ENCODE measurements at regions of chr2 and their contacts with region 1.

Region 1: DNA sequence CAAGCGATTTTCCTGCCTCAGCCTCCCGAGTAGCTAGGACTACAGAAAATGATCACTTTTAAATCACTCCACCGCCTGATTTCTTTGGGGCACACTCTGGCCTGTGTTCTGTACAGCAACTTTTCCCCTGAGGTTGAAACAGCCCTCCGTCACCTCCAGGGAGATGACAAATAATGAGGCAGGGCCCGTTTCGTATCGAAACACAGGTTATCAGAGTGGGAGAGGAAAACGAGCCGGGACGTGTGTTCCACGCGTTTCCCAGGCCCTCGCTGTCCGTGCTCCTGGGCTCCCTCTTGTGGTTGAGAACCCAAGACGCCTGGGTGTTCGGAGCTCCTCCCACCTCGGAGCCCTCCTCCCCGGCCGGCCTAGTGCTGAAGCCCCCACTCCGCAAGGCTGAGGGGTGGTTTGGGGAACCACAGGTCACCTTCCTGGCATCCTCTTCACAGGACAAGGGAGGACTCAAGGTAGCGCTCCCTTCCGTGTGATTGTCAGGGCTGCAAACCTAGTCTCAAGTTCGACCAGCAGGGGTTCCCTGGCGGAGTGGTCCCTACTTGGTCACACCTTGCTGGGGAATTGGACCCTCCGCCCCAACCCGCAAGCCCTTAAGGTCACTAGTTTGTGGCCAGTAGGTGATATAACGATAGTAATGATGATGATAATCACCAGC is 12.8 kb downstream of the ATP6V1B1 start:
- DNase-seq: peak; percentile 85
- ATAC-seq: peak; percentile 95 to 96

Region 2: DNA sequence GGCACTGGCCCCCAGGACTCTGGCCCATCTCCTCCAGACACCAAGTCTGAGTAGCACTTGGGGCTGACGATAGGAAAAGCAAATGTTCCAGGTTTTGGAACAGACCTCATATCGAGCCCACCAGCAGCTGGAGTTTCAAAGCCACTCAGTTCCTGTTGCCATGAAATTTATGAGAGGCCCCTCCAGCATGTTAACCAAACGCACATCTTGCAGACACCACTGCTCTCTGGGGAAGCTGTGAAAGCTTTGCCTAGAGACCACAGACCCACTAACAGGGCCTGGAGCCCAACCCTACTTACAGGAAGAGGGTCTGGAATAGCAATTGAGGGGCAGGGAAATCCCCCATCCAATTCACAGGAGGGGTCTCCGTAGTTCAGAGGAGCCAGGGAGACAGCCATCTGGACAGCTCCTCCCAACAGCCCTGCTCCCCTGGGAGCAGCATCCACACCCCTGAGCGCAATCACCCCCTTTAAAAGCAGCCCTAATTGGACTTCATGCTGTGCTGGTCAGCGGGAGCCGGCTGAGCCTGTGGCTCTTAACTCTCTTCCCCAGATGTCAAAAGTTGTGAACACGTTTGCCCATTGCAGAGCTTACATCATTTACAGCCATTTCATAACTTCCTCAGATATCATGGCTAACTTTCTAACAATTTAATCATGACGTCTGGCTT is 476.1 kb before region 1 on chr2:
- intact Hi-C with region 1: no loop called
- DNase-seq: no peak
- ATAC-seq: no peak

Region 3: GRCh38 chr2:70656421-70657010 is 292.0 kb before region 1 on chr2:
- intact Hi-C with region 1: loop called in 1 of 2 experiments (anchors 10 kb)
- DNase-seq: no peak
- ATAC-seq: no peak

Region 4: DNA sequence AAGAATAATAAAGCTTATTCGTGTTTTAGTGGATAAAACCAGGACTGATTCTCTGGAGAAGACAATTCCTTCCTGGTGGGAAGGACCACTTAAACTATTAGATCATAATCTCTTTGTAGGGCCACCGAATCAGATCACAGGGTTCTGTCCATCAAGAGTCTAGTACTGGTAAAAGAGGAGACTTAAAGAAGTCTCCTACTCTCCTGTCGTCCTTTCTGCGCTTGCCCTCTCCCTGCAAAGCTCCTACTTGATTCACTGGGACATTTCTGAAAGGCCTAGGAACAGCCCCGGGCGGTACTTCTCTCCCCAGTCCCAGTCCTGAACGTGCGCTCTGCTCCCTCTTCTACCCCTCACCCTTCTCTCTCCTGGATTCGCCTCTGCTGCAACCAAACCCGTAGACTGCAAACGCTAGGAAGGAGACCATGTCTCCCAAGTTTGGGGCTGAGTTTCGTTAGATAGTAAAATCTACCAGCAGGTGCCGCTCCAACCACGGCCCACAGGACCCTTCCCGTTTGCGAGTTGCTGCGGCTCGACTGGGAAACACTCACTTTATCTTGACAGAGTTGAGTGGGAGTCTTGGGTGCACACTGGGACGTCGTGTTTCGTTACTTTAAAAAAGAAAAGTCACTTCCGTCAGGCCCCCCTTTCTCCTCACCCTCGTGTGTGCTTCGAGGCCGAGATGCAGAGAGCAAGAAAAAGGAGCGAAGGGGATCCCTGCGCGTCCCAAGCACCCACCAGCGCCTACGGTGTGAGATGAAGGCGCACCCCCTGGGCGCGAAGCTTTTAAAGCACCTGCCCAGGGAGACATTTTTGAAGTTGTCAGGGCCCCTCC is 158.9 kb before region 1 on chr2:
- intact Hi-C with region 1: loop called in 1 of 2 experiments (anchors 5 kb)
- DNase-seq: peak; percentile 73
- ATAC-seq: peak; percentile 71 to 85

Region 5: DNA sequence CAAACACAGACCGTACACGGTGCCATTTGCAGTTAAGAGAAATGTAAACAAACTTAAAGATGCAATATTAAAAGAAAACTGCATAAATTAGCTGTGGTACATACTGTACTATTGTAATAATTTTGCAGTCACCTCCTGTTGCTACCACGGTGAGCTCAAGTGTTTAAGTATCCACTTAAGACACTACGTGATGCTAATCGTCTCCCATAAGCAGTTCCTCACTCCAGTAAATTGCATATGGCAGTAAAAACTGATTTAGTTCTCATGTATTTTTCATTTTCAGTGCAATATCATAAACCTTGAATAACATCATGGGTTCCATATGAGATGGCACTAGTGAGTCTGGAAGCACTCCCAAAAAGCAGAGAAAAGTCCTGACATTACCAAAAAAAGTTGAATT is 142.5 kb before region 1 on chr2:
- intact Hi-C with region 1: no loop called
- DNase-seq: no peak
- ATAC-seq: no peak

Region 6: GRCh38 chr2:70861777-70862625 is 86.5 kb before region 1 on chr2:
- intact Hi-C with region 1: loop called (anchors 2 to 5 kb)
- DNase-seq: peak; percentile 79
- ATAC-seq: peak; percentile 89

Measured in left cardiac atrium (tissue), 4 donors.